Sigmoid colon (tissue), 7 donors: ENCODE measurements at regions of chr6 and their contacts with region 1.

Region 1: DNA sequence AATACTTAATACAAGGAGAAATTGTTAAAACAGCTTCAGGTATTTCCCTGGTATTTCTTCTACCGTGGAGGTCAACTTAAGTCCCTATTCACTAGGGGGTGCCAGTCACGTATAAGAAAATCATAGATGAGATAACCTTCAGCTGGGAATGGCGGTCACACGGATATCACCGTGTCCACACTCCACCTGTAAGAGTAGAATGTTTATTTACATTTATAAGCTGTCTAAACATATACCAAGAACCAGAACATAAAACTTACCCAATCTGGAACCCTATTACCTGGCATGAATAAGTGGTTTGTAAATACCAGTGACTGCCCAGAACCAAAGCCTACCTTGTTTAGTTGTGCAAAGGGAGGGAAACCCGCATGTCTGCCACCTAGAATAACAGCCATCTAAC is 1.9 kb upstream of the ELOVL4 start:
- DNase-seq: no peak
- H3K4me3 ChIP-seq: no peak overlapping the region
- H3K27ac ChIP-seq: no peak overlapping the region
- H3K4me1 ChIP-seq: peaks cover 0 to 14% (median 13%) of the 10 kb centered on the region in 4 donors
- H3K27me3 ChIP-seq: no peaks in the 10 kb centered on the region
- CTCF ChIP-seq: peak in 1 of 4 experiments; percentile 48
- EP300 ChIP-seq: no peak
- POLR2A ChIP-seq: no peak

Region 2: GRCh38 chr6:79733388-79733787 is 215.8 kb before region 1 on chr6:
- intact Hi-C with region 1: no loop called
- DNase-seq: no peak
- H3K4me3 ChIP-seq: no peak overlapping the region
- H3K27ac ChIP-seq: no peak overlapping the region
- H3K4me1 ChIP-seq: no peaks in the 10 kb centered on the region
- H3K27me3 ChIP-seq: no peaks in the 10 kb centered on the region
- CTCF ChIP-seq: no peak
- EP300 ChIP-seq: no peak
- POLR2A ChIP-seq: no peak

Region 3: GRCh38 chr6:80004173-80005072 is 55.2 kb after region 1 on chr6 and contains the start of gene TTK:
- intact Hi-C with region 1: loop called (anchors 5 kb)
- DNase-seq: peak; percentile 95
- H3K4me3 ChIP-seq: peak within 1 kb of the TSS; percentile 55 to 69 (median 64)
- H3K27ac ChIP-seq: peak within 1 kb of the TSS; percentile 82 to 88 (median 86)
- H3K4me1 ChIP-seq: peaks cover 0 to 14% (median 9%) of the 10 kb centered on the region in 4 donors
- H3K27me3 ChIP-seq: no peaks in the 10 kb centered on the region
- CTCF ChIP-seq: no peak
- EP300 ChIP-seq: no peak
- POLR2A ChIP-seq: peak in 1 of 2 donors; percentile 56
- total RNA-seq, gene TTK: 0.16 to 0.55 (median 0.45) TPM

Region 4: GRCh38 chr6:80094017-80094416 is 144.8 kb after region 1 on chr6:
- intact Hi-C with region 1: loop called (anchors 5 kb)
- DNase-seq: no peak
- H3K4me3 ChIP-seq: no peak overlapping the region
- H3K27ac ChIP-seq: no peak overlapping the region
- H3K4me1 ChIP-seq: no peaks in the 10 kb centered on the region
- H3K27me3 ChIP-seq: no peaks in the 10 kb centered on the region
- CTCF ChIP-seq: peak in 3 of 4 experiments; percentile 31 to 61 (median 41)
- EP300 ChIP-seq: no peak
- POLR2A ChIP-seq: no peak